Dorsolateral prefrontal cortex (tissue), 120 donors: ENCODE measurements at regions of chr2 and their contacts with region 1.

Region 1: DNA sequence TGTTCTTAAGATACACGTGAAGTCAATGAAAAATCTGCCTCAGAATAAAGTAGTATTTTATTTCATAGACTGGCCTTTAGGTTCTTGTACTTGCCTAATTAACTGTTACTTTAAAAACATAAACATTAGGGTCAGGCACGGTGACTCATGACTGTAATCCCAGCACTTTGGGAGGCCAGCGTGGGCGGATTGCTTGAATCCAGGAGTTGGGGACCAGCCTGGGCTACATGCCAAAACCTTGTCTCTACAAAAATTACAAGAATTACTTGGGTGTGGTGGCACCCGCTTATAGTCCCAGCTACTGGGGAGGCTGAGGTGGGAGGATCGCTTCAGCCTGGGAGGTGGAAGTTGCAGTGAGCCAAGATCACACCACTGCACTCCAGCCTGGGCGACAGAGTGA is 16.0 kb upstream of the SNORC start:
- DNase-seq: no peak
- H3K4me3 ChIP-seq: no peak overlapping the region
- H3K27ac ChIP-seq: peak overlapping the region in 32 of 59 donors; percentile 1 to 72 (median 46)
- H3K27me3 ChIP-seq: no peaks in the 10 kb centered on the region
- CTCF ChIP-seq: no peak

Region 2: GRCh38 chr2:233059797-233060500 is 205.9 kb after region 1 on chr2 and contains the start of gene INPP5D:
- intact Hi-C with region 1: loop called (anchors 2 kb)
- DNase-seq: peak in 3 of 10 donors; percentile 28 to 37 (median 32)
- H3K4me3 ChIP-seq: peak within 1 kb of the TSS in 57 of 59 donors; percentile 2 to 64 (median 40)
- H3K27ac ChIP-seq: peak within 1 kb of the TSS in 55 of 59 donors; percentile 25 to 87 (median 69)
- H3K27me3 ChIP-seq: no peaks in the 10 kb centered on the region
- CTCF ChIP-seq: no peak
- total RNA-seq, gene INPP5D: 5.0 to 38.5 (median 18.8) TPM